AG04450 (cell line): ENCODE measurements at regions of chr9 and their contacts with region 1.

Region 1: DNA sequence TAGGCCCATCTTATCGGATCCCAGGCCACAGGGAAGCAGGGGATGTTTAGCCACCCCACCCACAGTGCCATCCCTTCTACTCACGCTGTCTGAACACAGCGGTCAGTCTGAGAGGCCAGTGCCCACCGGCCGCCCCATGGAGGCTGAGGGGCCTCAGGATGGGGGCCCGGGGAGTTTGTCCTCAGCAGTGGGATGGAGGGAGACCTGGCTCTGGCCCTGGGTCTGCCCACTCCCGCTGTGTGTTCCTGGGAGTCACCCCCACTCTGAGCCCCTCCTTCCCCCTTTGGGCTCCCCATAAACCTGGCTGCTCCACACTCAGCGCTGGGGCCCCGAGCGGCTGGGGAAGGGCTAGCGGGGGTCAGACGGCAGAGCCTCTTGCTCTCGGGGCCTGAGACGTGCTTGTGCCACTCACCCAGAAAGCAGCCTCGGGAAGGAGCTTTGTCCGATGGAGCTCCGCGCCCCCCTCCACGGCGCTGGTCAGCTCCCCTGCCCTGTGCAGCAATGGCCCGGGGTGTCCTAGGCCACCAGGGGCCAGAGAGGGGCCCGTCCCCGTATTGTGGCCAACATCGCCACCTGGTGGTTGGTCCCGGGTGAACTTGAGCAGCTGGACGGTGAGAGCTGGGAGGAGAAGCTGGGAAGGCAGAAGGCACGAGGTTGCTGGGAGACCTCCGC is 10.9 kb upstream of the LAMC3 start:
- DNase-seq: peak; percentile 18
- H3K4me3 ChIP-seq: no peak overlapping the region
- H3K27ac ChIP-seq: no peak overlapping the region
- H3K27me3 ChIP-seq: peaks cover 24% of the 10 kb centered on the region
- CTCF ChIP-seq: peak; percentile 78

Region 2: DNA sequence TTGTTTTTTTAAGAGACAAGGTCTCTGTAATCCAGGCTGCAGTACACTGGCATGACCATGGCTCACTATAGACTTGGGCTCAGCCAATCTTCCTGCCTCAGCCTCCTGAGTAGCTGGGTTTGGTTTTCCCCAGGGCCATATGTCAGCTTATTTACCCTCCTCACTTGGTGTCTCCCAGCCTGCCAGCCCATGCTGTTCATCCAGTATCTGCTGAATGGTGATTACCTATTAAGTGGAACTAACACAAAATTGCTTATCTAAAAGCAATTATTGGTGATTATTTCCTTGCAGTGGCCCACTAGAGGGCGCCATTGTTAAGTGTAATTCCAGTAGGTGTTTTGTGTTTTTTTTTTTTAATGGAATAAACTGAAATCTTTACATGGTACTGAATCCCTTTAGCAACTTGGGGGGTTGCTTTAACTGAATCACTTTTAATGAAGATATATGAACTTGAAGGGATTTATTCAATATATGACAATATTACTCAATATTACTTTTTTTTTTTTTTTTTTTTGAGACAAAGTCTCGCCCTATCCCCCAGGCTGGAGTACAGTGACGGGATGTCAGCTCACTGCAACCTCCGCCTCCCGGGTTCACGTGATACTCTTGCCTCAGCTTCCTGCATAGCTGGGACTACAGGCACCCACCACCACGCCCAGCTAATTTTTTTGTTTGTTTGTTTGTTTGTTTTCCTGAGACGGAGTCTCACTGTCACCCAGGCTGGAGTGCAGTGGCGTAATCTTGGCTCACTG is 290.7 kb before region 1 on chr9:
- CTCF ChIA-PET with region 1: interaction called, 56 read pairs
- POLR2A ChIA-PET with region 1: no interaction called
- DNase-seq: peak; percentile 54
- H3K4me3 ChIP-seq: no peak overlapping the region
- H3K27ac ChIP-seq: no peak overlapping the region
- H3K27me3 ChIP-seq: no peaks in the 10 kb centered on the region
- CTCF ChIP-seq: peak; percentile 72

Region 3: DNA sequence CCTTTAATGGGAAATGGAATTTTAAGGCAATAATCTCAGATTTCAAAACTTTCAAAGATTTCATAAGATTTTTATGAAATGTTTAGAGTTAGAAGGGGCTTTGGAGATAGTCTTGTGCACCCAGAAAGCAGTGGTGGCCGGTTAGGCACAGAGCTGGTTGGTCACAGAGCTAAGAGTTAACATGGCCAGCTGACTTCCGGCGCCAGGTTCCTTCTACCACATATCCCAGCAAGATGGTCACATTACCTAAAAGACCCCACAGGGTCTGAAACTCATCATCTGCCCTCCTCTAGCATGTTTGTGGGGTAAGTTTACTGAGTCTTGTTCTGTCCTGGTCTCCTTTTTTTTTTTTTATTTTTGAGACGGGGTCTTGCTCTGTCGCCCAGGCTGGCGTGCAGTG is 120.8 kb before region 1 on chr9:
- CTCF ChIA-PET with region 1: interaction called, 11 read pairs
- POLR2A ChIA-PET with region 1: no interaction called
- DNase-seq: no peak
- H3K4me3 ChIP-seq: no peak overlapping the region
- H3K27ac ChIP-seq: no peak overlapping the region
- H3K27me3 ChIP-seq: no peaks in the 10 kb centered on the region
- CTCF ChIP-seq: no peak

Region 4: GRCh38 chr9:130893341-130894101 is 104.5 kb before region 1 on chr9:
- CTCF ChIA-PET with region 1: interaction called, 10 read pairs
- POLR2A ChIA-PET with region 1: no interaction called
- DNase-seq: no peak
- H3K4me3 ChIP-seq: no peak overlapping the region
- H3K27ac ChIP-seq: peak overlapping the region; percentile 31
- H3K27me3 ChIP-seq: no peaks in the 10 kb centered on the region
- CTCF ChIP-seq: peak; percentile 38

Region 5: DNA sequence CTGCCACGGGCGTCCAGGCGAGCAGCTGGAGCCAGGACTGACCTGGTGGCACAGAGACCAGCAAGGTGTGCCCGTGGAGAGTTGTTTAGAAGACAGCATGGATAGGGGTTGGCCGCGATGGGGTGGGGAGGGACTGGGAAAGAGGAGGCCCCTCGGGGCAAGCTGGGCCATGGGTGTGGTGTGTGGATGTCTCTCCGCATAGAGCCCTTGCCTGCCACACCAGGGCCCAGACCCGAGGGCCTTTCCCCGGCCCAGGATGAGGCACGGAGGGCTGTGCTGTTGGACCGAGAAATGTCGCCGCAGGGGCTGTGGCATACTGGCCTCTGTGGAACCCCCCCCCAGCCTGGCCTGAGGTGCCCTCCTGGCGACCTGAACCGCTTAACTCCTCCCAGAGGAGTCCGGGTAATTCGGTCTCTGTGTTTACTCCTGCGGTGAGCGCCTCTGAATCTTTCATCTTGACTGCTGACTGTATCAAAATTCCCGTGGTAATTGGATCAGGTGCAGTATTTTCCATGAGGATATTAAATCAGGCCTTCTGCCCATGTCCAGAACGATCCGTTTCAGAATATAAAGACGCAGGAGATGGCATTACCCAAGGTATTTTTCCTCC is 11.6 kb before region 1 on chr9:
- CTCF ChIA-PET with region 1: interaction called, 11 read pairs
- POLR2A ChIA-PET with region 1: no interaction called
- DNase-seq: no peak
- H3K4me3 ChIP-seq: no peak overlapping the region
- H3K27ac ChIP-seq: no peak overlapping the region
- H3K27me3 ChIP-seq: peaks cover 17% of the 10 kb centered on the region
- CTCF ChIP-seq: no peak